ENCODE measurements at regions of chr21 and their contacts with region 1.

Region 1: GRCh38 chr21:34888569-34889319 is 160.4 kb downstream of the RUNX1 start:
- DNase-seq: peak; percentile 97
- H3K4me3 ChIP-seq: peak overlapping the region; percentile 50 to 81 (median 67)
- H3K27ac ChIP-seq: peak overlapping the region; percentile 78 to 93 (median 87)
- H3K4me1 ChIP-seq: peaks cover 0 to 48% (median 46%) of the 10 kb centered on the region in 4 donors
- H3K27me3 ChIP-seq: peaks cover 20 to 74% (median 54%) of the 10 kb centered on the region in 3 donors
- CTCF ChIP-seq: no peak
- EP300 ChIP-seq: peak in 2 of 4 donors; percentile 23 to 30
- POLR2A ChIP-seq: peak; percentile 29 to 53

Region 2: DNA sequence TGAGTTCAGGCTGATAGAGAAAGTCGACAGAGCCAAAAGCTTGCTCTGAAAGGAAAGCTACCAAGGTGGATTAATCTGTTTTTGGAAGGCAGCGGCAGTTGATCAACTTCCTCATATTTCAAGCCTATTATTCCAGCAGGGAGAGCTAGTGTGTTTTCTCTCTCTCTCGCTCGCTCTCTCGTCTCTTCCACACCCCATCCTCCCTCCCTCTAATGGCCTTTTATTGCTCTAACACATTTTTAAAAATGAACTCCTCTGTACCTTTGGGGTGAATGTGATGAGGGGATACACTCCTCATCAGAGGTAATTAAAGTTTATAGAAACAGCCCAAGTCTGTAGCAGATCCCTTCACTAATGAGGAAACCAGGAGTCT is 93.6 kb before region 1 on chr21:
- intact Hi-C with region 1: loop called (anchors 5 kb)
- DNase-seq: no peak
- H3K4me3 ChIP-seq: no peak overlapping the region
- H3K27ac ChIP-seq: peak overlapping the region; percentile 43 to 71 (median 58)
- H3K4me1 ChIP-seq: peaks cover 0 to 36% (median 32%) of the 10 kb centered on the region in 4 donors
- H3K27me3 ChIP-seq: no peaks in the 10 kb centered on the region
- CTCF ChIP-seq: peak in 1 of 4 experiments; percentile 28
- EP300 ChIP-seq: no peak
- POLR2A ChIP-seq: no peak

Region 3: DNA sequence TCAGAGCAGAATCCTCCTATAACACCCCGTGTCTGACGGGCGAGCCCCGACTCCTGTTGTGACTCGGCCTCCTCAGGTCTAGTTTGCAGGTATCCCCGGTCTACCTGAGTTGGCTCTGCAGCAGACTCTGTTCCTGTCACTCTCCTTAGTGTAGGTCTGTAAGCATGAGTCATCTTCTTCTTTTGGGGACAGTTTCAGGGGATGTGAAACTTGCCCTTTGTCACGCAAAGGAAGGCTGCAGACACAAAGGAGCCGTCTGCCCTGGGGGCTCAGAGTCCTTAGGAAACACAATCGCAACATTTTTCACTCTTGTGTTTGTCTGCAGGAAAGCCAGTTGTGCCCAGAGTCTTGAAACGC is 22.8 kb before region 1 on chr21:
- intact Hi-C with region 1: no loop called
- DNase-seq: no peak
- H3K4me3 ChIP-seq: no peak overlapping the region
- H3K27ac ChIP-seq: no peak overlapping the region
- H3K4me1 ChIP-seq: no peaks in the 10 kb centered on the region
- H3K27me3 ChIP-seq: no peaks in the 10 kb centered on the region
- CTCF ChIP-seq: no peak
- EP300 ChIP-seq: no peak
- POLR2A ChIP-seq: no peak

Region 4: GRCh38 chr21:34946916-34947534 is 58.3 kb after region 1 on chr21:
- intact Hi-C with region 1: no loop called
- DNase-seq: no peak
- H3K4me3 ChIP-seq: no peak overlapping the region
- H3K27ac ChIP-seq: no peak overlapping the region
- H3K4me1 ChIP-seq: no peaks in the 10 kb centered on the region
- H3K27me3 ChIP-seq: no peaks in the 10 kb centered on the region
- CTCF ChIP-seq: no peak
- EP300 ChIP-seq: no peak
- POLR2A ChIP-seq: no peak

Region 5: DNA sequence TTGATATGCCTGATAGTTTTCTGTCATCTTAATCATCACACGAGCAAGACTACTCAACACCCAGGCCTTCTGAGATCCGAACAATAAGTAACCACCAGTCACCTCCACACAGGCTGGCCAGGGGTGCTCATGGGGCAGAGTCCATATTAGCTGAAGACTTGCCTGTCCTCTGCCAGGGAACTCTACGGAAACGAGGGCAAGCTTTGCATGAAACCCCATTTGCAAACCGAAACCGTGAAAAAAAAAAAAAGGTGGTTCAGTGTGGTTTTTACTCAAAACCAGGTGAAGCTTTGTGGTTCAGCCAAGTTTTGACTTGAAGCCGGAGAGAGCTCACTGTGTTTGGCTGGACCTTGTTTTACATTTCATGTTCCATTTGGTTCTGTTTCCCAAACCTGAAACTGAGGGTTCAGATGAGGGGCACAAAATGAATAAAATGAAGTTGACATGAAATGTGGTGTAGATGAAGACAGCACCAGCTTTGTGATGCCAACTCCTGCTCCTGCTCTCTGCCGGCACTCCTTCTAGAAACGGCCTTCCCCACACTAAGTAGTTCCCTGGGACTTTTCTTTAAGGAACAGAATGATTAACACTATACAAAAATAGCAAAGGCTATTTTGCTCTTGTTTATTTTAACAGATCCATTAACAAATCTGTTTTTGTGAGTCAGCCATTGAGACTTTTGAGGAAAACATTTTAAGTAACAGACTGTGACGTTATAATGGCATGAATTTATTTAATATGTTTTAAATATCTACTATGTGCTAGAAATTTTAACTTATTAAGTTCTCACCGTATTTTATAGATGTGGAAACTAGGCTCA is 85.6 kb after region 1 on chr21:
- intact Hi-C with region 1: no loop called
- DNase-seq: no peak
- H3K4me3 ChIP-seq: no peak overlapping the region
- H3K27ac ChIP-seq: no peak overlapping the region
- H3K4me1 ChIP-seq: no peaks in the 10 kb centered on the region
- H3K27me3 ChIP-seq: no peaks in the 10 kb centered on the region
- CTCF ChIP-seq: no peak
- EP300 ChIP-seq: no peak
- POLR2A ChIP-seq: no peak

Region 6: DNA sequence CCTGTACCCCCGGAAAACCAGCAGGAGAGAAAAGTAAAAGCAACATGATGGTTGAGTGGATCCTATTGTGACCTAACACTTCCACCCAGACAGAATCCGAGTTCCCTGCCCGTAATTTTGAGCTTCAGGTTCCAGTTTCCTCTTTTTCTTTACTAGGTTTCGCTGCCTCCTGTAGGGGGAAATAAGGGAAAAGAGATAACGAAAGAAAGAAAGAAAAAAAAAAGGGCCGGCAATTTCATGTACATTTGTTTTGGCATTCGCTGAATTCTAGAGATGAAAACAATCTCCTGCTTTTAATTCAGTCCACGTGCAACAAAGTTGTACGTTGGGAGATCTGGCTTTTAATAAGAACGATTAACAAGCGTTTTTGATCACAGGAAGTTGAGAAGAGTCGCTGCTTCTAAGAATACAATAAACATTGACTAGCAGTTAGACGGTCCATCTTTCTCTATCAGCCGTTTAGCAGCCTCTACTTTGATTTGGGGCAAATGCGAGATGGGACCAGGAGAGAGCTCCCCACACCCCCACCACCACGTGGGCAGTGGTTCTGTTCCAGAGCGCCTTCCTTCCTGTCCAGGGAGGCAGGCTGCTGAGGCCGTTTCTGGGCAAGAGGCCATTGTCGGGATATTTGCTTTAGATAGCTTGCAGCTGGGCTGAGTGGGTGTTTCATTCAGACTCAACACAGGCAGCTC is 316.3 kb after region 1 on chr21:
- intact Hi-C with region 1: loop called (anchors 5 kb)
- DNase-seq: peak; percentile 89
- H3K4me3 ChIP-seq: peak overlapping the region in 3 of 4 donors; percentile 23 to 25 (median 24)
- H3K27ac ChIP-seq: peak overlapping the region; percentile 31 to 82 (median 68)
- H3K4me1 ChIP-seq: peaks cover 0 to 52% (median 43%) of the 10 kb centered on the region in 4 donors
- H3K27me3 ChIP-seq: no peaks in the 10 kb centered on the region
- CTCF ChIP-seq: peak in 1 of 4 experiments; percentile 15
- EP300 ChIP-seq: peak in 1 of 4 donors; percentile 9
- POLR2A ChIP-seq: no peak

Region 7: DNA sequence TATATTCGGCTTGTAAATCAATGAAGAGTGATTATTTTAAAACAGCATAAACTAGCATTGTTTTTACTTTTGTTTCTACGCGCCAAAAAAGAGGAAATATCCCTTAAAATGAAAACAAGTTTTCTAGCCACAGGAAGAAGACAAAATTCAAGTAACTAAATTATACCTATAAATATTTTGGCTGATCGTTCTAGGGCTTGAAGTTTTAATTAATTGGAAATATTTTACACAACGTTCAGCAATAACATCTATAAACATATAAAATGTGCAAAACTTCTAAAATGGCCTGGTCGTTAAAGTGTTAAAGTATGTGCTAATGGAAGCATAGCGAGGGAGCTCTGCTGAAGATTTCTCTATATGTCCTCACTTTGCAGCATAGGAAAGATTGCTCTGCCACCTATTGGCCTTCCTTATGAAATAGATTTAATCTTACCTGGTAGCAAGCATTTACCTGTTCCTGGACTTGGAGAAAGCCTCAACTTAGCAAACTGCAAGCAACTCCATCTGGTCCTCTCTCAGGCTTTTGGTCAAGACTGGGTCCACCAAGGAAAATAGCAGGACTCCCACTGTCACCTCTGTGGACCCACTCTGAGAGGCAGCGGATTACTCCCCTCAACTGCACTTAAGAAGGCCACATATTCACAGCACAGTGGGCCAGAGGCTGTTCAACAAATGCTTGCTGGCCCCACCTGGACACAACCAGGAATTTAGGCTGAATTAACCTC is 511.7 kb after region 1 on chr21:
- intact Hi-C with region 1: loop called (anchors 1 kb)
- DNase-seq: no peak
- H3K4me3 ChIP-seq: no peak overlapping the region
- H3K27ac ChIP-seq: no peak overlapping the region
- H3K4me1 ChIP-seq: peaks cover 0 to 19% (median 6%) of the 10 kb centered on the region in 4 donors
- H3K27me3 ChIP-seq: no peaks in the 10 kb centered on the region
- CTCF ChIP-seq: peak; percentile 48 to 59 (median 54)
- EP300 ChIP-seq: no peak
- POLR2A ChIP-seq: no peak

Region 8: DNA sequence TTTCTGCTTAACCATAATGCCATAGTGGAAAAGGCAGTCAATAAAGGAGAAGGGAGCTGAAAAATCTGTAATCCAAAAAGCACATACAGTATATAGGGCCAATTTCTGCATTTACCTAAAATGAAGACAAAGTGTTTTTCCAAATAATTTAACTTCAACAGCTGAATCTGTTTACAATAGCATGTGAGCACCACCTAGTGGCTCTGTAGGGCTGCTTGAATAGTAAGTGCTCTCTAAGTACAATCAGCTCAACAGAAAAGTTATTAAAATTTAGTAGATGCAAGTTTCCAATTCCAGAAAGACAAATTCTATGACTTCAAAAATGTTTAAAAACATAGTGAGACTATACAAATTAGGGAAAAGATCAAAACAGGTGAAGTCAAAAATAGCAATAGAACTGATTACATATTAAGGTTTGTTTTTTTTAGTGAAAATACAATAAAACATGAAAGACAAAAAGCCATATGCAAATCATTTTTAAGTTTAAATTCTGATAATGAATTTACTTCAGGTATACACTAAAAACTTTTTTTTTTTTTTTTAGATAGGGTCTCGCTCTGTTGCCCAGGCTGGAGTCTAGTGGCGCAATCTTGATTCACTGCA is 951.6 kb after region 1 on chr21:
- intact Hi-C with region 1: loop called (anchors 5 kb)
- DNase-seq: peak; percentile 75
- H3K4me3 ChIP-seq: no peak overlapping the region
- H3K27ac ChIP-seq: no peak overlapping the region
- H3K4me1 ChIP-seq: no peaks in the 10 kb centered on the region
- H3K27me3 ChIP-seq: no peaks in the 10 kb centered on the region
- CTCF ChIP-seq: peak; percentile 27 to 73 (median 68)
- EP300 ChIP-seq: no peak
- POLR2A ChIP-seq: no peak